ENCODE measurements at regions of chr17 and their contacts with region 1.

Region 1: DNA sequence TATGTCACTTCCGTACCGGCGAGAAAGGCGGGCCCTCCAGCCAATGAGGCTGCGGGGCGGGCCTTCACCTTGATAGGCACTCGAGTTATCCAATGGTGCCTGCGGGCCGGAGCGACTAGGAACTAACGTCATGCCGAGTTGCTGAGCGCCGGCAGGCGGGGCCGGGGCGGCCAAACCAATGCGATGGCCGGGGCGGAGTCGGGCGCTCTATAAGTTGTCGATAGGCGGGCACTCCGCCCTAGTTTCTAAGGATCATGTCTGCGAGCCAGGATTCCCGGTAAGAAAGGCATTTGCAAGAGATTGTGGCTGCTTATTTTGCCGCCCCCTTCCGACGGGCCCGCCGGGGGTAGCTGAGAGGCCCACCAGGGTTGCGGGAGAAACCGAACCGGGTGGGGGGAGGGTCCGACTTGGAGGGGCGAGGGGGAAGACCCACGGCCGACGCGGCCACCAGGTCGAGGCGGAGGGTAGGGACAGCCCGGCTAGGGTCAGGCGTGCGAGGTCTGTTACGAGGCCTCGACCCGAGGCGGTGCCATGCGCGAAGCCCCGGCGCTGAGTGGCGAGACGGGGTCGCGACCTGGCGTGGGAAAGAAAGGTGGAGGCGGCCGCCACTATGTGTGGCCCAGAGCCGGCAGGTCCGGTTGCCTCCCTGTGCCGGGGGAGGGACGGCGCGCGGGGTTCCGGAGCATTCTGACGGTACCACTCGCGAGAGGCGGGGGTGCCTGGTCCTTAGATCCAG is 6.7 kb upstream of the CD68 start:
- DNase-seq: peak; percentile 98
- ATAC-seq: no peak; the same call in 2 of the 3 replicates
- H3K4me3 ChIP-seq: peak overlapping the region; percentile 89 to 96 (median 94)
- H3K27ac ChIP-seq: peak overlapping the region; percentile 93
- H3K4me1 ChIP-seq: peaks cover 51% of the 10 kb centered on the region
- H3K27me3 ChIP-seq: no peaks in the 10 kb centered on the region; a peak in 1 of 5 replicates
- CTCF ChIP-seq: 0 out of 2 replicates have a peak, but pooled peaks have one; percentile 2
- EP300 ChIP-seq: no peak
- POLR2A ChIP-seq: peak; percentile 96 to 98
- RAD21 ChIP-seq: no peak; the same call in none of the 2 replicates

Region 2: GRCh38 chr17:7583253-7584109 is 10.7 kb after region 1 on chr17 and contains the start of gene MPDU1:
- CTCF ChIA-PET with region 1: no interaction called
- POLR2A ChIA-PET with region 1: interaction called, 51 read pairs
- in situ Hi-C with region 1: no loop called
- intact Hi-C with region 1: no loop called
- DNase-seq: peak; percentile 81
- ATAC-seq: peak; percentile 22
- H3K4me3 ChIP-seq: peak within 1 kb of the TSS; percentile 73 to 83 (median 77)
- H3K27ac ChIP-seq: peak within 1 kb of the TSS; percentile 96
- H3K4me1 ChIP-seq: peaks cover 55% of the 10 kb centered on the region
- H3K27me3 ChIP-seq: no peaks in the 10 kb centered on the region; a peak in 1 of 5 replicates
- CTCF ChIP-seq: peak; percentile 20; the same call in 1 of the 2 replicates
- EP300 ChIP-seq: 0 out of 4 replicates have a peak, but pooled peaks of 1 of the 2 experiments have one; percentile 18
- POLR2A ChIP-seq: peak; percentile 79 to 98
- RAD21 ChIP-seq: no peak
- total RNA-seq, gene MPDU1: 59.5 and 112 TPM in 2 replicates

Region 3: GRCh38 chr17:8029135-8029534 is 456.4 kb after region 1 on chr17:
- CTCF ChIA-PET with region 1: no interaction called
- POLR2A ChIA-PET with region 1: no interaction called
- in situ Hi-C with region 1: no loop called
- intact Hi-C with region 1: no loop called
- DNase-seq: no peak
- ATAC-seq: no peak
- H3K4me3 ChIP-seq: no peak overlapping the region
- H3K27ac ChIP-seq: no peak overlapping the region
- H3K4me1 ChIP-seq: peaks cover 19% of the 10 kb centered on the region
- H3K27me3 ChIP-seq: peaks cover 1 to 27% of the 10 kb centered on the region in 2 experiments; a peak in 2 of 5 replicates
- CTCF ChIP-seq: no peak
- EP300 ChIP-seq: no peak
- POLR2A ChIP-seq: no peak
- RAD21 ChIP-seq: no peak

Measured in HepG2 (cell line).